CD8-positive, alpha-beta T cell (primary cell): ENCODE measurements at regions of chr6 and their contacts with region 1.

Region 1: GRCh38 chr6:32177788-32178546 is at the start of gene RNF5:
- DNase-seq: peak; percentile 84 to 100 (median 93)
- ATAC-seq: peak; percentile 83
- H3K4me3 ChIP-seq: peak within 1 kb of the TSS; percentile 72 to 82
- H3K4me3 Mint-ChIP-seq: peak within 1 kb of the TSS; percentile 93
- H3K27ac ChIP-seq: peak within 1 kb of the TSS; percentile 89 to 98
- H3K27ac Mint-ChIP-seq: peak within 1 kb of the TSS; percentile 96
- H3K4me1 ChIP-seq: peaks cover 59% of the 10 kb centered on the region
- H3K4me1 Mint-ChIP-seq: peaks cover 69% of the 10 kb centered on the region
- H3K27me3 ChIP-seq: no peaks in the 10 kb centered on the region
- H3K27me3 Mint-ChIP-seq: no peaks in the 10 kb centered on the region
- CTCF ChIP-seq: no peak
- total RNA-seq, gene RNF5: 10.0 to 11.5 TPM

Region 2: GRCh38 chr6:31862344-31863227 is 315.4 kb before region 1 on chr6 and contains the start of gene NEU1:
- CTCF ChIA-PET with region 1: no interaction called
- POLR2A ChIA-PET with region 1: no interaction called
- intact Hi-C with region 1: loop called in 1 of 2 experiments (anchors 2 kb)
- DNase-seq: peak; percentile 97 to 100 (median 98)
- ATAC-seq: peak; percentile 91
- H3K4me3 ChIP-seq: peak within 1 kb of the TSS; percentile 75 to 94
- H3K4me3 Mint-ChIP-seq: peak within 1 kb of the TSS; percentile 95
- H3K27ac ChIP-seq: peak within 1 kb of the TSS; percentile 77 to 97
- H3K27ac Mint-ChIP-seq: peak within 1 kb of the TSS; percentile 98
- H3K4me1 ChIP-seq: peaks cover 17% of the 10 kb centered on the region
- H3K4me1 Mint-ChIP-seq: peaks cover 23% of the 10 kb centered on the region
- H3K27me3 ChIP-seq: no peaks in the 10 kb centered on the region
- H3K27me3 Mint-ChIP-seq: no peaks in the 10 kb centered on the region
- CTCF ChIP-seq: no peak
- total RNA-seq, gene NEU1: 30.0 to 30.2 TPM

Region 3: DNA sequence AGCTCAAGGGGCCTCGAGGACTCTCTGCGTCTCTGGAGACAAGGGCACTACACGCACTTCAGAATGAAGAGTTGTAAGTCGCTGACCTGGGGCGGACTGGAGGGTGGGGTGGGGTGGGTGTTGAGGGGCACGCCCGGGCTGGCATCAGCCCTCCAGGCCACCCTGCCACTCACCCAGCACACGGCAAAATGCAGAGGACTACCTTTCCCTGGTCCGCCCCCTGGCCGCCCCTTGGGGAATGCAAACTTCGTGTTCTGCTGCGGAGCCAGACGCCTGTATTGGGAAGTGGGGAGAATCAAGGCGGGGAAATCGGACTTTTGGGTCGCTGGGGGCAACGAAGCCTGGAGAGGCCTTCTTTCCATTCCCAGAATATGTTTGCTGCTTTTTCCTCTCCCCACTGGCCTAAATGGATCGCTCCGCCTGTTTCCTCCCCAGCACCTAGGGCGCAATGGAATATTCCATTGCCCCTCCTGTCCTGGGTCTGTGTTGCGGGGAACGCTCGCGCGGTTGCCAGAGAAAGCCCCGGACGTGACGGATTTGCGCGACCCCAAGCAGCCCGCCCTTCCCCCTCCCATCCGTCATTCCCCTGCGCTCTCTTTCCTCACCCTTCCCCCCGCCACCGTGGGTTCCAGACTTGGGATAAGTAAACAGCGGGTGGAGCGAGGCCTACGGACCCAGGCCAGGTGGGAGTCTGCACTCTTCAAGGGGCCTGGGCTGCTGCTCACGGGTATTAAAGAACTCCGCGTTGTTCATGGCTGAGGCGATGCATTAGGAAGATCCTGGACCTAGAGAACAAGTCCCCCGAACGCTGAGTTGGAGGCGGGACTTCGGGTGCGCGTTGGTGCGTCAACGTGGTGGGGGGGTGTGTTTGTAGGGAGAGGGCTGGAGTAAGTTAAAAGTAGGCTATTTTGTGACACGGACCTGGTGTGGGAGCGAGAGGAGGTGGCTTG is 24.1 kb before region 1 on chr6 and contains the start of gene PPT2:
- CTCF ChIA-PET with region 1: interaction called, 3 read pairs
- POLR2A ChIA-PET with region 1: interaction called, 7 read pairs
- intact Hi-C with region 1: loop called (anchors 1 kb)
- DNase-seq: peak; percentile 52 to 95 (median 80)
- ATAC-seq: peak; percentile 74
- H3K4me3 ChIP-seq: peak within 1 kb of the TSS; percentile 84 to 88
- H3K4me3 Mint-ChIP-seq: peak within 1 kb of the TSS; percentile 97
- H3K27ac ChIP-seq: peak within 1 kb of the TSS; percentile 67 to 76
- H3K27ac Mint-ChIP-seq: peak within 1 kb of the TSS; percentile 85
- H3K4me1 ChIP-seq: peaks cover 40% of the 10 kb centered on the region
- H3K4me1 Mint-ChIP-seq: peaks cover 59% of the 10 kb centered on the region
- H3K27me3 ChIP-seq: peaks cover 0 to 5% of the 10 kb centered on the region in 2 experiments
- H3K27me3 Mint-ChIP-seq: peaks cover 8% of the 10 kb centered on the region
- CTCF ChIP-seq: no peak
- total RNA-seq, gene PPT2: 11.1 to 25.5 TPM

Region 4: GRCh38 chr6:32843979-32844838 is 666.2 kb after region 1 on chr6 and contains the start of gene PSMB8:
- CTCF ChIA-PET with region 1: no interaction called
- POLR2A ChIA-PET with region 1: no interaction called
- intact Hi-C with region 1: loop called in 1 of 2 experiments (anchors 5 kb)
- DNase-seq: peak; percentile 96 to 99 (median 99)
- ATAC-seq: peak; percentile 75
- H3K4me3 ChIP-seq: peak within 1 kb of the TSS; percentile 99
- H3K4me3 Mint-ChIP-seq: peak within 1 kb of the TSS; percentile 99
- H3K27ac ChIP-seq: peak within 1 kb of the TSS; percentile 96 to 100
- H3K27ac Mint-ChIP-seq: peak within 1 kb of the TSS; percentile 99
- H3K4me1 ChIP-seq: peaks cover 79% of the 10 kb centered on the region
- H3K4me1 Mint-ChIP-seq: peaks cover 83% of the 10 kb centered on the region
- H3K27me3 ChIP-seq: no peaks in the 10 kb centered on the region
- H3K27me3 Mint-ChIP-seq: no peaks in the 10 kb centered on the region
- CTCF ChIP-seq: no peak
- total RNA-seq, gene PSMB8: 108 to 117 TPM